ENCODE measurements at regions of chr22 and their contacts with region 1.

Region 1: GRCh38 chr22:48968201-48968959 is 859.3 kb downstream of the BRD1 start:
- DNase-seq: no peak
- CTCF ChIP-seq: peak; percentile 23

Region 2: GRCh38 chr22:49052023-49052538 is 83.7 kb after region 1 on chr22:
- in situ Hi-C with region 1: loop called (anchors 25 kb)
- DNase-seq: peak; percentile 60
- CTCF ChIP-seq: no peak

Region 3: DNA sequence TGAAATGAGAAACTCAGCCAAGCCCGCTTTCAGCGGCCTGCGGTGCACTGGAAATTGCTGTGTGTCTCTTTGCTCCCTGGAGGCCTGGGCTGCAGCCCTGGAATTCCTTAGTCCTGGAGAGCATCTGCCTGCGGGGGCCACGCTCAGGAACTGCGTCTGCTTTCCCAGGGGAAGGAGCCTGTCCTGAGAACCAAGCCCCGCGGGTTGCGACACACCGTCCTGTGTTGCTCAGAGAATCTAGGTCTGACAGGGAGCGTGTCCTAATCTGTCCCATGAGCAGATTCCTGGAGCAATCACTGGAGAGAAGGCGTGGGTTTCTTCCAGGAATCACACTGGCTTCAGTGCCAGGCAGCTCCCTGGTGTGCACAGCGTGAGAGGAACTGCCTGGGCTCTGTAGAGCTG is 151.2 kb after region 1 on chr22:
- in situ Hi-C with region 1: no loop called
- DNase-seq: no peak
- CTCF ChIP-seq: no peak